Sigmoid colon (tissue), 7 donors: ENCODE measurements at regions of chr4 and their contacts with region 1.

Region 1: GRCh38 chr4:46270986-46271596 is 118.8 kb downstream of the GABRA2 start:
- DNase-seq: no peak
- H3K4me3 ChIP-seq: no peak overlapping the region
- H3K27ac ChIP-seq: no peak overlapping the region
- H3K4me1 ChIP-seq: no peaks in the 10 kb centered on the region
- H3K27me3 ChIP-seq: no peaks in the 10 kb centered on the region
- CTCF ChIP-seq: peak in 3 of 4 experiments; percentile 11 to 48 (median 38)
- EP300 ChIP-seq: no peak
- POLR2A ChIP-seq: no peak

Region 2: DNA sequence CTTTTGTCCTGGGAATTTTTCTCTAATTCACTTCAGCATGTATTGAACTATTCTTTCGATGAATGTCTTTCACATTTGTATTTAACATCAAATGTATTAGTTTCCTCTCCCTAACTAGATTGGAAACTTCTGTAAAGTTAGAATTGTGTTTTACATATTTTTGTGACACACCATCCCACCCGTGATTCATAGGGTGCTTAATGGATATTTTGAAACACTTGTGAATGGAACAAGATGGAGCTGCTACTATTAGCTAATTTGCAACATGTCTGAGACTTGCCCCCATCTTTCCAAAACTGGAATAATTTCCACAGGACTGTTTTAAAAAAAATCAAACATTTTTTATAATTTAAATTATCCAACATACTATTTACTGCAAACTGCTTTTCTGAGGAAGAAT is 1514.5 kb before region 1 on chr4:
- intact Hi-C with region 1: loop called (anchors 5 kb)
- DNase-seq: no peak
- H3K4me3 ChIP-seq: no peak overlapping the region
- H3K27ac ChIP-seq: no peak overlapping the region
- H3K4me1 ChIP-seq: peaks cover 0 to 5% (median 0%) of the 10 kb centered on the region in 4 donors
- H3K27me3 ChIP-seq: no peaks in the 10 kb centered on the region
- CTCF ChIP-seq: no peak
- EP300 ChIP-seq: no peak
- POLR2A ChIP-seq: no peak

Region 3: GRCh38 chr4:46417848-46418247 is 146.8 kb after region 1 on chr4:
- intact Hi-C with region 1: no loop called
- DNase-seq: no peak
- H3K4me3 ChIP-seq: no peak overlapping the region
- H3K27ac ChIP-seq: no peak overlapping the region
- H3K4me1 ChIP-seq: no peaks in the 10 kb centered on the region
- H3K27me3 ChIP-seq: no peaks in the 10 kb centered on the region
- CTCF ChIP-seq: no peak
- EP300 ChIP-seq: no peak
- POLR2A ChIP-seq: no peak